Caco-2 (cell line): ENCODE measurements at regions of chr12 and their contacts with region 1.

Region 1: GRCh38 chr12:25386831-25387731 is 136.4 kb upstream of the KRAS start:
- DNase-seq: peak; percentile 85 to 92
- H3K4me3 ChIP-seq: peak overlapping the region; percentile 67
- H3K4me3 Mint-ChIP-seq: peak overlapping the region; percentile 97
- H3K27ac Mint-ChIP-seq: peak overlapping the region; percentile 99
- H3K4me1 ChIP-seq: peaks cover 11% of the 10 kb centered on the region
- H3K4me1 Mint-ChIP-seq: peaks cover 33% of the 10 kb centered on the region
- H3K27me3 ChIP-seq: no peaks in the 10 kb centered on the region
- H3K27me3 Mint-ChIP-seq: no peaks in the 10 kb centered on the region
- CTCF ChIP-seq: peak; percentile 92 to 94

Region 2: DNA sequence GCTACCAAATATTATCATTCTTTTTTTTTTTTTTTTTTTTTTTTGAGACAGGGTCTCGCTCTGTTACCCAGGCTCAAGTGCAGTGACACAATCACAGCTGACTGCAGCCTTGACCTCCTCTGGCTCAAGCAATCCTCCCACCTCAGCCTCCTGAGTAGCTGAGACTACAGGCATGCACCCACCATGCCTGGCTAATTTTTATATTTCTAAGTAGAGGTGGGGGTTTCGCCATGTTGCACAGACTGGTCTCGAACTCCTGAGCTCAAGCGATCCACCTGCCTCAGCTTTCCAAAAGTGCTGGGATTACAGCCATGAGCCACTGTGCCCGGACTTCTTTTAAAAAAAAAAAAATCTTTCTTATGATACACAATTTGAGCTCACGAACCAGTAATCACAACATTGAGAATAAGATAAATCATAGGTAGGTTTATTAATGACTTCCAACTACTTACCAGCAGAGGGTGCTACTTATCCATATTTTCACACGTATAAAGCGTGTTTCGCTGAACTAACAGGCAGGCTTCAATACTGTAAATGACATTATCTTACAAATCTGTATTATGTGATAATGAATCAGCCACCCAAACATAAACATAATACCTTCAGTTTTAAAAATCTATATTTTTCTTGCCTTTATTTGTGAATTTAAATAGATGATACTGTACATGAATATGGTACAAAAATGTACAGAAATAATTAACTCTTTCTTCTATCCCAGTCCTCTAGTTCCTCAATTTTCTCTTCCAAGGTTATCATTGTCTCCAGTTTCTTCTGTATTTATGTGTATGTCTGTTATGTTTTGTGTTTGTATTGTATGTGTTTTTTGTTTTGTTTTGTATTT is 395.7 kb before region 1 on chr12:
- CTCF ChIA-PET with region 1: no interaction called
- POLR2A ChIA-PET with region 1: no interaction called
- intact Hi-C with region 1: loop called (anchors 1 kb)
- DNase-seq: peak in 1 of 2 experiments; percentile 69
- H3K4me3 ChIP-seq: no peak overlapping the region
- H3K4me3 Mint-ChIP-seq: no peak overlapping the region
- H3K27ac Mint-ChIP-seq: no peak overlapping the region
- H3K4me1 ChIP-seq: no peaks in the 10 kb centered on the region
- H3K4me1 Mint-ChIP-seq: peaks cover 17% of the 10 kb centered on the region
- H3K27me3 ChIP-seq: no peaks in the 10 kb centered on the region
- H3K27me3 Mint-ChIP-seq: no peaks in the 10 kb centered on the region
- CTCF ChIP-seq: peak; percentile 47 to 74

Region 3: DNA sequence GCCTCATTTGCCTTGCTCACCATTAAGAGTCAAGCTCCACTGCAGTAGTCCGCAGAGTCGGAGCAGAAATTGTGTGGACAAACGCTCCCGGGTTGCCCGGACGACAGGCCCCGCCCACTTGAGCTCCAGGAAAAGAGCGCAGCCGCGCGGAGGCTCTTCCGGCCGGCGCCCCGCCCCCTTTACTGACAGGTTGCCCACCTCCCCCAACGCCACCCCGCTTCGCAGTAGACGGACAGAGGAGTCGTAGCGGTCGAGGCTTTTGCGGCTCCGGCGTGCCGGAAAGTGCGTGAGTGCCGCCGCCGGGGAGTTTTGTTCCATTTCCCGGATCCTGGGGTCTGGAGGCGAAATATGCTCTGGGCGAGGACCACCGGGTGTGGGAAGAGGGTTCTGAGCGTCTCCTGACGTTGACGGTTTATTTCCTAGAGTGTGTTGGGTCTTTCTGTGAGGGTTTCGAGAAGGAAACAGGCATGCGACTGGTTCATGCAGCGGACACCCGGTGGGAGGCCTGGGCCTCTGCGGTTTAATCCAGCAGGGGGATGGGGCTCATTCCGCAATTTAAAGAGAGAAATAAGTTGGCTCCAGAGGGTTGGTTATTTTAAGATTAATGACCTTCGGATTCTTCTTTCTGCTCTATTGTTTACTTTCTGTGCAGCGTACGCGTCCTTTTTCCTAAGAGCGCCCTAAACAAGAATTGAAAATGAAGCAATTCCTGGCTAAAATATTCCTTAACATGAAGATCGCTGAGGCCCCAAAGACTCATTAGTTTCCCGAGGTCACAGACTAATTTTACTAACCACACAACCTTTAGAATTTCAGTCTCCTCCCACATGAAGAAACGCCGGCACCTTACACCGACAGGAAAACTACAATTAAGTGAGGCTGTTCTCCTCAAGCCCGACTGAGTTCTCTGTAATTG is 191.8 kb before region 1 on chr12 and contains the starts of genes DNAI7 and ETFRF1:
- CTCF ChIA-PET with region 1: interaction called, 13 read pairs
- POLR2A ChIA-PET with region 1: interaction called, 17 read pairs
- intact Hi-C with region 1: no loop called
- DNase-seq: peak; percentile 99 to 100
- H3K4me3 ChIP-seq: peak within 1 kb of the TSS; percentile 64
- H3K4me3 Mint-ChIP-seq: peak within 1 kb of the TSS; percentile 87
- H3K27ac Mint-ChIP-seq: peak within 1 kb of the TSS; percentile 96
- H3K4me1 ChIP-seq: peaks cover 8% of the 10 kb centered on the region; the same call in 1 of the 2 replicates
- H3K4me1 Mint-ChIP-seq: no peaks in the 10 kb centered on the region
- H3K27me3 ChIP-seq: no peaks in the 10 kb centered on the region
- H3K27me3 Mint-ChIP-seq: no peaks in the 10 kb centered on the region
- CTCF ChIP-seq: peak; percentile 24 to 42
- total RNA-seq, gene DNAI7: 0.66 and 0.67 TPM in 2 replicates
- total RNA-seq, gene ETFRF1: 9.5 and 10.2 TPM in 2 replicates

Region 4: DNA sequence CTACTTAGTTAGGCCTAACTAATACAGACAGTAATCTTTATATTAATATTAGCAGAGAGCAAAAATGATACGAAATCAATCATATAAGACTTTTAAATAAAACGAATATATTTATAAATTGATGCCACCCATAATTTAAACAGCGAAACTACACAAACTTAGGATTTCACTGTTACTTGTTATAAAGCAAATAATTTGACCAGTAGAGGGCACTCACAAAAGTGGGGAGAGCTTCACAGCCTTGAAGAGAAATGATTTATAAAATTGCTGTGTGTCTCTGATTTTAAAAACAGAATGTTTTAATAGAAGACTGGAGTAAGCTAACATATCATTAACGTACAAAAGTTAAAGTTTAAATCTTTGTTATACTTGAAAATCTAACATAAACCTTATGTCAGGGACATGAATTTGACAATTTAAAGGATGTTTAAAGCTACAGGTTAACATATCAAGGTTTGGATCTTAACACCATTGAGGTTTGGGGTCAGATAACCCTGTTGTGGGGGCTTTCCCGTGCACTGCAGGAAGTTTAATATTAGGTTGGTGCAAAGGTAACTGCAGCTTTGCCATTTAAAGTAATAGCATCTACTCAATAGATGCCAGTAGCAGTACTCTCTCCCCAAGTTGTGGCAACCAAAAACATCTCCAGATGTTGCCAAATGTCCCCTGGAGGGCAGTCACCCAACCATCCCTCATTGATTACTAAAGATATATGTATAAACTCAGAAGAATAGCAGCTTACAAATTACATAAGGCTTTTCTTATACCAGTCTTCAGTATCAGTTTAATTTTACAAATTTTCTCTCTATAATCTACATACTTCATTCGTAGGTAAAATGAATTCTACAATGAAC is 145.7 kb before region 1 on chr12:
- CTCF ChIA-PET with region 1: interaction called, 4 read pairs
- POLR2A ChIA-PET with region 1: interaction called, 5 read pairs
- intact Hi-C with region 1: loop called (anchors 1 kb)
- DNase-seq: no peak
- H3K4me3 ChIP-seq: no peak overlapping the region
- H3K4me3 Mint-ChIP-seq: no peak overlapping the region
- H3K27ac Mint-ChIP-seq: no peak overlapping the region
- H3K4me1 ChIP-seq: peaks cover 39% of the 10 kb centered on the region
- H3K4me1 Mint-ChIP-seq: peaks cover 55% of the 10 kb centered on the region
- H3K27me3 ChIP-seq: no peaks in the 10 kb centered on the region
- H3K27me3 Mint-ChIP-seq: no peaks in the 10 kb centered on the region
- CTCF ChIP-seq: peak; percentile 72 to 83

Region 5: GRCh38 chr12:25256826-25257225 is 130.3 kb before region 1 on chr12:
- CTCF ChIA-PET with region 1: interaction called, 7 read pairs
- POLR2A ChIA-PET with region 1: interaction called, 9 read pairs
- intact Hi-C with region 1: loop called (anchors 1 kb)
- DNase-seq: no peak
- H3K4me3 ChIP-seq: no peak overlapping the region
- H3K4me3 Mint-ChIP-seq: peak overlapping the region; percentile 43
- H3K27ac Mint-ChIP-seq: peak overlapping the region; percentile 79
- H3K4me1 ChIP-seq: peaks cover 61% of the 10 kb centered on the region
- H3K4me1 Mint-ChIP-seq: peaks cover 69% of the 10 kb centered on the region
- H3K27me3 ChIP-seq: no peaks in the 10 kb centered on the region
- H3K27me3 Mint-ChIP-seq: no peaks in the 10 kb centered on the region
- CTCF ChIP-seq: no peak

Region 6: DNA sequence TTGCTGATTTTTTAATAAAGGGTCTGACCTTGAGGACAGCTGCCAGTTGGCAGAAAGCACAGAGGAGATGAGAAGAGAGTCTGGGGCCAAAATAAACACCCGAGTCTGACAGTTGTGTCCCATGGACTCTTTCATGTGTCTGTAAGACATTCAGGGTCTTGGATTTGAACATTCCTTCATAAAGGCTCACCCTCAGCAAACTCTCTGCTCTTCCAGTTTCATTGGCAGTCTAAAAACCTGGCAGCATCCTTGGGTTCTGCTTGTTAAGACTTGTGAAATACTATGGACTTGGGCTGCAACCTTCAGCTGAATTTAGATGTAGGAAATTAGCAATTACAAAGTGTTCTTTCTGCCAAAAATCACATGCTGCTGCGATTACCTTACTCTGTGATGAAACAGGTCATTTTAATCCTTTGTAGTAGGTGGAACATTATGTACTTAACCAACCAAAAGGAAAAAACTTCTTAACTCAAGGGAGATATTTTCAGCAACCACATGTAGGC is 198.0 kb after region 1 on chr12:
- CTCF ChIA-PET with region 1: no interaction called
- POLR2A ChIA-PET with region 1: no interaction called
- intact Hi-C with region 1: no loop called
- DNase-seq: no peak
- H3K4me3 ChIP-seq: no peak overlapping the region
- H3K4me3 Mint-ChIP-seq: no peak overlapping the region
- H3K27ac Mint-ChIP-seq: no peak overlapping the region
- H3K4me1 ChIP-seq: 0 out of 2 replicates have a peak, but pooled peaks cover 6% of the 10 kb centered on the region
- H3K4me1 Mint-ChIP-seq: peaks cover 8% of the 10 kb centered on the region
- H3K27me3 ChIP-seq: no peaks in the 10 kb centered on the region
- H3K27me3 Mint-ChIP-seq: no peaks in the 10 kb centered on the region
- CTCF ChIP-seq: no peak